ENCODE measurements at regions of chr17 and their contacts with region 1.

Region 1: GRCh38 chr17:78258323-78259191 is 27.1 kb downstream of the TMEM235 start:
- DNase-seq: peak in 4 of 5 donors; percentile 21 to 75 (median 59)
- H3K4me3 ChIP-seq: peak overlapping the region; percentile 68
- H3K4me3 Mint-ChIP-seq: peak overlapping the region; percentile 39 to 78 (median 54)
- H3K27ac ChIP-seq: peak overlapping the region; percentile 75
- H3K27ac Mint-ChIP-seq: peak overlapping the region in 5 of 8 donors; percentile 33 to 90 (median 63)
- H3K4me1 ChIP-seq: peaks cover 87% of the 10 kb centered on the region
- H3K4me1 Mint-ChIP-seq: peaks cover 22 to 49% (median 25%) of the 10 kb centered on the region in 3 donors
- H3K27me3 ChIP-seq: no peaks in the 10 kb centered on the region
- H3K27me3 Mint-ChIP-seq: no peaks in the 10 kb centered on the region

Region 2: GRCh38 chr17:78414178-78415162 is 155.9 kb after region 1 on chr17:
- CTCF ChIA-PET with region 1: no interaction called
- POLR2A ChIA-PET with region 1: interaction called, 19 read pairs
- DNase-seq: peak; percentile 26 to 59 (median 39)
- H3K4me3 ChIP-seq: peak overlapping the region; percentile 42
- H3K4me3 Mint-ChIP-seq: peak overlapping the region; percentile 34 to 85 (median 59)
- H3K27ac ChIP-seq: peak overlapping the region; percentile 43
- H3K27ac Mint-ChIP-seq: peak overlapping the region; percentile 78 to 98 (median 94)
- H3K4me1 ChIP-seq: peaks cover 56% of the 10 kb centered on the region
- H3K4me1 Mint-ChIP-seq: peaks cover 48 to 73% (median 63%) of the 10 kb centered on the region in 3 donors
- H3K27me3 ChIP-seq: no peaks in the 10 kb centered on the region
- H3K27me3 Mint-ChIP-seq: no peaks in the 10 kb centered on the region

Region 3: DNA sequence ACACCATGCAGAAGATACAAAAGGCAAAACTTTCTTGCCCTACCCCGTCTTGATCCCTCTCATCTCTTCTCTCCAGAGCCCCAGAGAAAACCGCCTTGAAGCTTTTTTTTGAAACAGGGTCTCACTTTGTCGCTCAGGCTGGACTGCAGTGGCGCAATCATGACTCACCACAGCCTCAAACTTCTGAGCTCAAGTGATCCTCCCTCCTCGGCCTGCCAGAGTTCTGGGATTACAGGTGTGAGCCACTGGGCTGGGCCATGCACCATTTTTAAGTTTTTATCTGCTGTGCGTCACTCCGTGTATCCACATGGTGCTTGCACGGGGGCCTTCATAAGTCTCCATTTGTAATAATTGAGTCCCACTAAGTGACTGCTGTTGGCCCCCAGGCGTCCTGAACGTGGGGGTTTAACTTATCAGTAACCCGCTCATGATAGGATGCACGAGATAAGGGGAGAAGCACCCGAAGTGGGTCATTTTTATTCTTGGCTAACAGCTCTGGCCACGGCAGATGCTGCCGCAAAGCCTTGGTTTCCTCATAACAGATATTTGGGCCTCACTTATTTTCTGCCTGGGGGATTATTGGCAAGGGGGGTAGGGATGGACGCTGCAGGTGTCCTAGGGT is 310.0 kb after region 1 on chr17:
- CTCF ChIA-PET with region 1: no interaction called
- POLR2A ChIA-PET with region 1: no interaction called
- DNase-seq: no peak
- H3K4me3 ChIP-seq: no peak overlapping the region
- H3K4me3 Mint-ChIP-seq: no peak overlapping the region
- H3K27ac ChIP-seq: no peak overlapping the region
- H3K27ac Mint-ChIP-seq: peak overlapping the region in 1 of 8 donors; percentile 2
- H3K4me1 ChIP-seq: no peaks in the 10 kb centered on the region
- H3K4me1 Mint-ChIP-seq: no peaks in the 10 kb centered on the region
- H3K27me3 ChIP-seq: no peaks in the 10 kb centered on the region
- H3K27me3 Mint-ChIP-seq: peaks cover 12 to 39% of the 10 kb centered on the region in 2 donors